Left ventricle myocardium inferior (tissue), 1 donor: ENCODE measurements at regions of chrX and their contacts with region 1.

Region 1: GRCh38 chrX:48511561-48511960 is 2.8 kb downstream of the PORCN start:
- DNase-seq: no peak
- H3K4me3 ChIP-seq: no peak overlapping the region
- H3K27ac ChIP-seq: no peak overlapping the region
- H3K4me1 ChIP-seq: peaks cover 7% of the 10 kb centered on the region
- H3K27me3 ChIP-seq: no peaks in the 10 kb centered on the region
- CTCF ChIP-seq: peak; percentile 36

Region 2: GRCh38 chrX:48083212-48083611 is 428.3 kb before region 1 on chrX:
- intact Hi-C with region 1: loop called (anchors 5 kb)
- DNase-seq: peak; percentile 13
- H3K4me3 ChIP-seq: no peak overlapping the region
- H3K27ac ChIP-seq: no peak overlapping the region
- H3K4me1 ChIP-seq: no peaks in the 10 kb centered on the region
- H3K27me3 ChIP-seq: no peaks in the 10 kb centered on the region
- CTCF ChIP-seq: peak; percentile 68